ENCODE measurements at regions of chr7 and their contacts with region 1.

Region 1: DNA sequence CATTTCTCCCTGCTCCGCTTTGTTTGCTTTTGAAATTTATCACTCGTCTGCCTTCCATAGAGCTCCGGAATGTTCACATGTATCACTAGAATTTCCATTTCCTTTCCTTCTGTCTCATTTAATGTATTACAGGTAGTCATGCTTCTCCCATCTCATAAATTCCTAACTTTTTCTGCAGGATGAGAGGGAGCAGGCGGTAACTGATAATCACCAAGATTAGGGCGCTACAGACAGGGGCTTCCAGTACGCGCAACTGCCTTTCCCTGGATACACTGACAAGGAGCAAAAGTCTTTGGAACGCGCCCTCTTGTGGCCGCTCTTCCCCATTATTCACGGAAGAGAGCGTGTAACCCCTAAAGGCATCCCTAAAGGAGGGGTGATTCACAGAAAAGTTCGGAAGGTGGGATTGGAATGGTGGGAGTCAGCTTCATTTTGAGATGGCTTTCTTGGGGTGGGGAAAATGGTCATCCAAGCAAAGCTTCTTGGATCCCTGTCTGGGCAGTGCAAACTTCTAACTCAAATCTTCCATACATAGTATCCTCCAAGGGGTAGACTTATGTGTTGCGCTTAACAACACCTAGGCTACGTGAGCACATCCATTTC is 6.5 kb downstream of the INHBA start:
- DNase-seq: peak; percentile 72 to 88
- H3K4me3 ChIP-seq: no peak overlapping the region
- H3K27ac ChIP-seq: no peak overlapping the region
- H3K4me1 ChIP-seq: peaks cover 1 to 20% (median 16%) of the 10 kb centered on the region in 4 experiments; a peak in 5 of 7 replicates
- H3K27me3 ChIP-seq: 0 out of 7 replicates have a peak, but pooled peaks cover 0 to 3% (median 0%) of the 10 kb centered on the region in 4 experiments
- CTCF ChIP-seq: peak; percentile 59 to 84 (median 79)
- EP300 ChIP-seq: no peak
- POLR2A ChIP-seq: no peak
- RAD21 ChIP-seq: peak; percentile 86 to 90

Region 2: DNA sequence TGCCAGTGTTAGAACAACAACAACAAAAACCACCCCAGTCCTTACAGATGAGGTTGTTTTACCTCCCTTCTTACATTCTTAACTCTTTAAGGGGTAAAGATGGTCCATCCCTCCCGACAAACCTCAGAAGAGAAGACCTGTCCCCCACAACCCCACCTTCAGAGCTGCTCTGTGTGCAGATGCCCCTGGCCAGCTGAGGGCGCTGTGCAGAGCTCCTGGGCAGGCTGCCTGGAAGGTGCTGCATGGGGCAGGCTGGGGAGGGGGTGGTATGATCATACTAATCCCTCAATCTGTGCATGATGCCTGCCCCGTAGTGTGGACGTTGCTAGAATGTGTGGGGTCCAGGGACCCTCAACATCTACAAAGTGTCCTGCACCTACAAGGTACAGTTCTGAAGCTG is 380.7 kb before region 1 on chr7:
- CTCF ChIA-PET with region 1: interaction called, 12 read pairs
- POLR2A ChIA-PET with region 1: no interaction called
- DNase-seq: peak in 1 of 2 experiments; percentile 83
- H3K4me3 ChIP-seq: no peak overlapping the region
- H3K27ac ChIP-seq: no peak overlapping the region
- H3K4me1 ChIP-seq: peaks cover 0 to 5% (median 4%) of the 10 kb centered on the region in 4 experiments; a peak in 3 of 7 replicates
- H3K27me3 ChIP-seq: no peaks in the 10 kb centered on the region
- CTCF ChIP-seq: peak; percentile 80 to 92 (median 83)
- EP300 ChIP-seq: no peak
- POLR2A ChIP-seq: no peak
- RAD21 ChIP-seq: peak; percentile 73 to 80

Region 3: DNA sequence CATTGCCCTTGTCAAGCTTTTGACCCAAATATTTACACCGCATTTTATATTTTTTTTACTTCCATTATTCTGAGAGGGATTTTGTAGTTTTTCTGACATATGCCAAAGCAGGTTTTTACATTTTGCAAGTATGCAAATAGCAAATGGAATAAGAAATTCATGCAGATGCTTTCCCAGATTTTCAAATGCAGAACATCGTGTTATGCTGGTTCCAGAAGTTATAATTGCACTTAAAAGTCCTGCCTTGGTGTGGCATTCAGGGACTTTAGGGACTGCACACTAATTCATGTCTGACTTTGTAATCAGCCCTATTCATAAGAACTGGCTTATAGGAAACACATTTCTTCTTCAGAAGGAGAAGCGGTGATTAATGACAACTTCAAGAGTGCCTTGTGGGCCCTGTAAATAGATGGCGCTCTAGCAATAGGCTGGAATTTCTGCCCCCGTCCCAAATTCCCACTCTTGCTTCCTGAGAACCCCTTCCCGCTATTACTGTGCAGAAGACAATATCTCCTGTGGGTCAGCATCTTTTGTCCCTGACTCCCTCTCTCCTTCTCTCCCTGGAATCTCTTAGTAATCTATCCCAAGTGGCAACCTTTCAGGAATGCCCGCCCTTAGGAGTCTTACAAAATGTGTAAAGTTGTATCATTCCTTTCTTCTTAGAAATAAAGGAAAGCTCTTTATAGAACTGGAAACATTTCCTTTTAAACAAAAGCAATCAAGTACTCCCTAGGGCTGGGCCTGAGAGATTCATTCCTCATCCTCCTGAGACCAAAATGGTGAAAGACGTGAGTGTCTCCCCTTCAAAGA is 257.5 kb before region 1 on chr7:
- CTCF ChIA-PET with region 1: interaction called, 10 read pairs
- POLR2A ChIA-PET with region 1: no interaction called
- DNase-seq: no peak
- H3K4me3 ChIP-seq: no peak overlapping the region
- H3K27ac ChIP-seq: no peak overlapping the region
- H3K4me1 ChIP-seq: no peaks in the 10 kb centered on the region
- H3K27me3 ChIP-seq: no peaks in the 10 kb centered on the region
- CTCF ChIP-seq: peak in 2 of 3 experiments; percentile 16 to 22; a peak in 1 of 4 replicates
- EP300 ChIP-seq: no peak
- POLR2A ChIP-seq: no peak
- RAD21 ChIP-seq: peak; percentile 52 to 56

Region 4: GRCh38 chr7:41529831-41530230 is 166.6 kb before region 1 on chr7:
- CTCF ChIA-PET with region 1: no interaction called
- POLR2A ChIA-PET with region 1: no interaction called
- DNase-seq: no peak
- H3K4me3 ChIP-seq: no peak overlapping the region
- H3K27ac ChIP-seq: no peak overlapping the region
- H3K4me1 ChIP-seq: no peaks in the 10 kb centered on the region
- H3K27me3 ChIP-seq: no peaks in the 10 kb centered on the region
- CTCF ChIP-seq: no peak
- EP300 ChIP-seq: no peak
- POLR2A ChIP-seq: no peak
- RAD21 ChIP-seq: no peak

Region 5: GRCh38 chr7:41682422-41682821 is 14.0 kb before region 1 on chr7:
- CTCF ChIA-PET with region 1: interaction called, 10 read pairs
- POLR2A ChIA-PET with region 1: no interaction called
- DNase-seq: no peak
- H3K4me3 ChIP-seq: no peak overlapping the region
- H3K27ac ChIP-seq: no peak overlapping the region
- H3K4me1 ChIP-seq: peaks cover 0 to 3% (median 0%) of the 10 kb centered on the region in 4 experiments; a peak in 1 of 7 replicates
- H3K27me3 ChIP-seq: no peaks in the 10 kb centered on the region
- CTCF ChIP-seq: no peak
- EP300 ChIP-seq: no peak
- POLR2A ChIP-seq: no peak
- RAD21 ChIP-seq: no peak

Region 6: GRCh38 chr7:41745451-41745850 is 49.0 kb after region 1 on chr7:
- CTCF ChIA-PET with region 1: no interaction called
- POLR2A ChIA-PET with region 1: no interaction called
- DNase-seq: no peak
- H3K4me3 ChIP-seq: no peak overlapping the region
- H3K27ac ChIP-seq: no peak overlapping the region
- H3K4me1 ChIP-seq: no peaks in the 10 kb centered on the region
- H3K27me3 ChIP-seq: no peaks in the 10 kb centered on the region
- CTCF ChIP-seq: no peak
- EP300 ChIP-seq: no peak
- POLR2A ChIP-seq: no peak
- RAD21 ChIP-seq: no peak

Measured in H1 (cell line).